ENCODE measurements at regions of chr12 and their contacts with region 1.

Region 1: GRCh38 chr12:117236456-117237001 is 46.3 kb upstream of the FBXO21 start:
- DNase-seq: peak; percentile 22
- H3K4me3 ChIP-seq: no peak overlapping the region
- CTCF ChIP-seq: peak; percentile 74

Region 2: DNA sequence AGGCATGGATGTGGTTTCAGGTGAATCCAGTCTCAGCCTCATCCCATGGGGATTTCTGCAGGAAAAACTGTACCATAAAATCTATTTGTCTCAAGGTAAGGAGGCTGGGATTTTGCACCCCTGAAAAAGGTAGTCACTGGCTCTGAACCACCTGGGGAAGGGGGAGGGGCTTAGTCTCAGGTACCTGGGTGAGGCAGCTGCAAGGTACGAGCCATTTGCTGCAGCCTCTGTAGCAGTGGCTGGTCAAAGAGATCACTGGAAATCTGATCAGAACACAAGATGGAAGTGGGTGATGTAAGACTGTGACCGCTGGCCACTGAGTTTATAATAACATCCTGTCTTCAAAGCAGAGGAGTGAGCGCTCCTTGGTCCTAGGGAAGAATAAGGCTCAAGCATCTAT is 334.8 kb after region 1 on chr12:
- in situ Hi-C with region 1: loop called (anchors 10 kb)
- DNase-seq: no peak
- H3K4me3 ChIP-seq: no peak overlapping the region
- CTCF ChIP-seq: no peak

Region 3: GRCh38 chr12:117857632-117858612 is 621.4 kb after region 1 on chr12:
- in situ Hi-C with region 1: loop called (anchors 10 kb)
- DNase-seq: no peak
- H3K4me3 ChIP-seq: no peak overlapping the region
- CTCF ChIP-seq: peak; percentile 59

Measured in astrocyte of the cerebellum (primary cell).